Activated CD8-positive, alpha-beta memory T cell treated with anti-CD3 and anti-CD28 coated beads, Interleukin-2, amount 10 ng/mL, durations not matched to agents 7 days and 5 days (primary cell): ENCODE measurements at regions of chr1 and their contacts with region 1.

Region 1: DNA sequence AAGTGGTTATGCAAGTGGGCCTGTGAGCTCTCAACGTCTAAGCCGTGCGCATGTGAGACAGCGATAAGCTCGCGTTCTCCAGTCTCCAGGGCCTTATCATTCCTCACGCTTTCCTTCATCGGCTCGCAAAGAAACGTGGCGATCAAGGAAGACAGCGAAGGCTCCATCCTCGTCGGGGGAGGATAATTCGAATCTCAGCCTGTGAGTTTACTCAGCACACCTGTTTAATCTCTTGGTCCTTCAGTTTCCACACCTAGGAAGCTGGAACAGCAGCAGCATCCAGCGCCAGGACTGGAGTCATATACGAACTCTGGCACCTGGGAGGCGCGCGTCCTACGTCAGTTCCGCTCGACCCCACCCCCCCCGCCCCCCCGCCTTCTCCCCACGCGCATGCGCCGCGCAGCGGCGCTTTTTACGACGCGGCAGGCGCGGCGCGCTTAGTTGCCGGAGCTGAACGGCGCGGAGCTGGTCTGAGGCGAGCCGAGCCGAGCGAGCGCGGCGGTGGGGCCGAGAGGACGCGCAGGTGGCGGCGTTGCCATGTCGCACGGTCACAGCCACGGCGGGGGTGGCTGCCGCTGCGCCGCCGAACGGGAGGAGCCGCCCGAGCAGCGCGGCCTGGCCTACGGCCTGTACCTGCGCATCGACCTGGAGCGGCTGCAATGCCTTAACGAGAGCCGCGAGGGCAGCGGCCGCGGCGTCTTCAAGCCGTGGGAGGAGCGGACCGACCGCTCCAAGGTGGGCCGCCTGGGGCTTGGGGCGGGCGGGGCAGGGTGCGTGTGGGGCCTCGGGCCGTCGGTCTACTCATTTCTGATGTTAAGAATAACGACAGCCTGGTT is at the start of gene PITHD1:
- DNase-seq: peak; percentile 87
- ATAC-seq: peak; percentile 88
- H3K4me3 Mint-ChIP-seq: peak within 1 kb of the TSS; percentile 96
- H3K27ac Mint-ChIP-seq: peak within 1 kb of the TSS; percentile 94
- H3K4me1 Mint-ChIP-seq: peaks cover 59% of the 10 kb centered on the region
- H3K27me3 Mint-ChIP-seq: no peaks in the 10 kb centered on the region
- total RNA-seq, gene PITHD1: 52.9 to 67.1 TPM

Region 2: GRCh38 chr1:23489842-23490241 is 288.4 kb before region 1 on chr1:
- CTCF ChIA-PET with region 1: no interaction called
- DNase-seq: no peak
- ATAC-seq: no peak
- H3K4me3 Mint-ChIP-seq: no peak overlapping the region
- H3K27ac Mint-ChIP-seq: no peak overlapping the region
- H3K4me1 Mint-ChIP-seq: peaks cover 2% of the 10 kb centered on the region
- H3K27me3 Mint-ChIP-seq: peaks cover 45% of the 10 kb centered on the region

Region 3: DNA sequence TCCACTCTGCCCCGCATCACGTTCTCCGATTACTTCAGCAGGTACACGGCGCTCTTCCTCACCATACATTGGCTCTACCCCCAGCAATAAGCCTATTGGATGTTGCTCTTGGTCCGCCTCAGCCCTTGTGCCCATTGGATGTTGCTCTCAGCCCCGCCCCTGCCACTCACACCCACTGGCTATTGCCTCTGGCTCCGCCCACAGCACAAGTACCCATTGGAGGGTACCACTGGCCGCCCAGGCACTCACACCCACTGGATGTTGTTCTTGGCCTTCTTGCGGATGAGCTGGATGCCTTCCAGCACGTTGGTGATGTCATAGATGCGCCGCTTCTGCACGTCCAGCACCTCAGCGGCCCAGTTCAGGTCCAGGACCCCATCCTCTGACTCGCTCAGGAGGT is 256.6 kb before region 1 on chr1:
- CTCF ChIA-PET with region 1: no interaction called
- DNase-seq: no peak
- ATAC-seq: no peak
- H3K4me3 Mint-ChIP-seq: no peak overlapping the region
- H3K27ac Mint-ChIP-seq: no peak overlapping the region
- H3K4me1 Mint-ChIP-seq: peaks cover 42% of the 10 kb centered on the region
- H3K27me3 Mint-ChIP-seq: no peaks in the 10 kb centered on the region

Region 4: GRCh38 chr1:23790696-23791515 is 12.7 kb after region 1 on chr1 and contains the start of gene LYPLA2:
- CTCF ChIA-PET with region 1: interaction called, 38 read pairs
- DNase-seq: peak; percentile 93
- ATAC-seq: peak; percentile 95
- H3K4me3 Mint-ChIP-seq: peak within 1 kb of the TSS; percentile 94
- H3K27ac Mint-ChIP-seq: peak within 1 kb of the TSS; percentile 90
- H3K4me1 Mint-ChIP-seq: peaks cover 17% of the 10 kb centered on the region
- H3K27me3 Mint-ChIP-seq: no peaks in the 10 kb centered on the region
- total RNA-seq, gene LYPLA2: 75.7 to 87.2 TPM

Region 5: GRCh38 chr1:23837908-23838307 is 59.7 kb after region 1 on chr1:
- CTCF ChIA-PET with region 1: no interaction called
- DNase-seq: no peak
- ATAC-seq: no peak
- H3K4me3 Mint-ChIP-seq: peak overlapping the region; percentile 66
- H3K27ac Mint-ChIP-seq: no peak overlapping the region
- H3K4me1 Mint-ChIP-seq: peaks cover 15% of the 10 kb centered on the region
- H3K27me3 Mint-ChIP-seq: peaks cover 15% of the 10 kb centered on the region

Region 6: GRCh38 chr1:23916209-23917131 is 138.3 kb after region 1 on chr1:
- CTCF ChIA-PET with region 1: interaction called, 10 read pairs
- DNase-seq: peak; percentile 79
- ATAC-seq: peak; percentile 96
- H3K4me3 Mint-ChIP-seq: no peak overlapping the region
- H3K27ac Mint-ChIP-seq: no peak overlapping the region
- H3K4me1 Mint-ChIP-seq: peaks cover 23% of the 10 kb centered on the region
- H3K27me3 Mint-ChIP-seq: peaks cover 8% of the 10 kb centered on the region

Region 7: GRCh38 chr1:24094554-24094953 is 316.4 kb after region 1 on chr1:
- CTCF ChIA-PET with region 1: no interaction called
- DNase-seq: no peak
- ATAC-seq: no peak
- H3K4me3 Mint-ChIP-seq: no peak overlapping the region
- H3K27ac Mint-ChIP-seq: no peak overlapping the region
- H3K4me1 Mint-ChIP-seq: no peaks in the 10 kb centered on the region
- H3K27me3 Mint-ChIP-seq: peaks cover 5% of the 10 kb centered on the region